Transverse colon (tissue), 4 donors: ENCODE measurements at regions of chr9 and their contacts with region 1.

Region 1: GRCh38 chr9:74526215-74526614 is 29.1 kb downstream of the RORB start:
- DNase-seq: no peak
- H3K4me3 ChIP-seq: no peak overlapping the region
- H3K27ac ChIP-seq: no peak overlapping the region
- H3K4me1 ChIP-seq: no peaks in the 10 kb centered on the region
- H3K27me3 ChIP-seq: no peaks in the 10 kb centered on the region
- CTCF ChIP-seq: no peak
- EP300 ChIP-seq: no peak
- POLR2A ChIP-seq: no peak

Region 2: GRCh38 chr9:74505212-74505611 is 21.0 kb before region 1 on chr9:
- in situ Hi-C with region 1: no loop called
- intact Hi-C with region 1: loop called (anchors 1 kb)
- DNase-seq: no peak
- H3K4me3 ChIP-seq: no peak overlapping the region
- H3K27ac ChIP-seq: no peak overlapping the region
- H3K4me1 ChIP-seq: peaks cover 0 to 2% (median under 1%) of the 10 kb centered on the region in 4 donors
- H3K27me3 ChIP-seq: peaks cover 35% of the 10 kb centered on the region
- CTCF ChIP-seq: no peak
- EP300 ChIP-seq: no peak
- POLR2A ChIP-seq: no peak